ENCODE measurements at regions of chr16 and their contacts with region 1.

Region 1: GRCh38 chr16:14070877-14071575 is at the start of gene MRTFB:
- DNase-seq: peak; percentile 66
- ATAC-seq: peak; percentile 85
- H3K4me3 ChIP-seq: peak within 1 kb of the TSS; percentile 97
- H3K27ac ChIP-seq: peak within 1 kb of the TSS; percentile 30
- H3K4me1 ChIP-seq: peaks cover 18% of the 10 kb centered on the region
- H3K27me3 ChIP-seq: no peaks in the 10 kb centered on the region
- CTCF ChIP-seq: no peak
- total RNA-seq, gene MRTFB: 8.1 and 12.7 TPM in 2 replicates

Region 2: GRCh38 chr16:14013571-14014282 is 57.3 kb before region 1 on chr16:
- CTCF ChIA-PET with region 1: no interaction called
- POLR2A ChIA-PET with region 1: no interaction called
- intact Hi-C with region 1: loop called (anchors 5 kb)
- DNase-seq: peak; percentile 62
- ATAC-seq: peak; percentile 40
- H3K4me3 ChIP-seq: no peak overlapping the region
- H3K27ac ChIP-seq: peak overlapping the region; percentile 68
- H3K4me1 ChIP-seq: peaks cover 14% of the 10 kb centered on the region
- H3K27me3 ChIP-seq: no peaks in the 10 kb centered on the region
- CTCF ChIP-seq: no peak

Region 3: GRCh38 chr16:14151256-14152030 is 80.4 kb after region 1 on chr16:
- CTCF ChIA-PET with region 1: no interaction called
- POLR2A ChIA-PET with region 1: no interaction called
- intact Hi-C with region 1: no loop called
- DNase-seq: no peak
- ATAC-seq: no peak
- H3K4me3 ChIP-seq: no peak overlapping the region
- H3K27ac ChIP-seq: no peak overlapping the region
- H3K4me1 ChIP-seq: peaks cover 12% of the 10 kb centered on the region
- H3K27me3 ChIP-seq: no peaks in the 10 kb centered on the region
- CTCF ChIP-seq: no peak

Region 4: DNA sequence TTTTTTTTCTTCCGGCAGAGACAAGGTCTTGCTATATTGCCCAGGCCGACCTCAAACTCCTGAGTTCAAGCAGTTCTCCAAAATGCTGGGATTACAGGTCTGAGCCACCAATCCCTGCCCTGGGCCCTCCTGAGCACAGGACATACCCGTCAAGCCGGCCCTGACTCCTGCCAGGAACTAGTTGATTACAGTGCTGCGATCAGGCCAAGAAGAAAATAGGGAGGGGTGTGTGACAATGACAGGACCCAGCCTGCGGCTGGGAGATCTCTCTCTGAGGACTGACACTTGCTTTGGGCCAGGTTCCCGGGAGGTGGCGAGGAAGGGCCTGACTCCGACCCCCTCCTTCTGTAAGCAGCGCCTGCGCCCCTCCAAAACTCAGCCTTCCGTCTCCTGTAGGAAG is 276.7 kb after region 1 on chr16:
- CTCF ChIA-PET with region 1: no interaction called
- POLR2A ChIA-PET with region 1: no interaction called
- intact Hi-C with region 1: no loop called
- DNase-seq: no peak
- ATAC-seq: no peak
- H3K4me3 ChIP-seq: no peak overlapping the region
- H3K27ac ChIP-seq: no peak overlapping the region
- H3K4me1 ChIP-seq: no peaks in the 10 kb centered on the region
- H3K27me3 ChIP-seq: no peaks in the 10 kb centered on the region
- CTCF ChIP-seq: no peak